ENCODE measurements at regions of chr11 and their contacts with region 1.

Region 1: DNA sequence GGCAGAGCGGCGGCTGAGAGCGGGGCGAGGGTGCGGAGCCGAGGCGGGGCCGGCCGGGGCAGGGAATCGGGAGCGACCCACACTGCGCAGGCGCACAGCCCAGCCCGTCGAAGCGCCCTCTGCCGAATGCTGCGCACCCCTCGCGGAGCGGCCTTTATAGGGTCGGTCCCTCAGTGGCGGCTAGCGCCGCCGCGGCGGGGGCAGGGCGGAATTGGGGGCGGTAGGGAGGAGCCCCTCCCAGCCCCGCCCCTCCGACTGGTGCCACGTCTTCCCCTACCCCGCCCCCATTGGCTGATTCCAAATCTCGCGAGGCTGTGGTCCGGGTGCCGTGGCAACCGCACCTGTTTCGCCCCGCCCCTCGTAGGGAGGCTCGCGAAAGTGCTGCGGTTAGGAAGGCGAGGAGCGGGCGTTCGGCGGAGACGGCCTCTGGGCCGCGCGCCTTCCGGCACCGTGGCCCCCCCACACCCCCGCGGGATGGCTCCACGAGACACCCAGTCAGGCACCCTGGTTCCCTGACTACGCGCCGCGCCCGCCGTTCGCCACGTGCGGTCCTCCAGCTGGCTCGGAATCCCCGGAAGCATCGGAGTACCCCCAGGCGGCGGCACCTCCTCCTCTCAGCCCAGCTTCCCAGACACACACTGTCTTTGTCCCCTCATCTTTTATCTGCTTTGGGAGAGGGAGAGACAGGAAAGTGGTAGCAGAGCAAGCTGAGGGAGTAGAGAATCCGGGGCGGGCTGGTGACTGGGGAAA is at the start of gene EHD1:
- DNase-seq: peak; percentile 100
- ATAC-seq: peak; percentile 85
- H3K4me3 Mint-ChIP-seq: peak within 1 kb of the TSS; percentile 92
- H3K27ac Mint-ChIP-seq: peak within 1 kb of the TSS; percentile 97
- H3K4me1 Mint-ChIP-seq: peaks cover 60% of the 10 kb centered on the region
- H3K27me3 Mint-ChIP-seq: no peaks in the 10 kb centered on the region
- total RNA-seq, gene EHD1: 71.0 to 73.6 TPM

Region 2: DNA sequence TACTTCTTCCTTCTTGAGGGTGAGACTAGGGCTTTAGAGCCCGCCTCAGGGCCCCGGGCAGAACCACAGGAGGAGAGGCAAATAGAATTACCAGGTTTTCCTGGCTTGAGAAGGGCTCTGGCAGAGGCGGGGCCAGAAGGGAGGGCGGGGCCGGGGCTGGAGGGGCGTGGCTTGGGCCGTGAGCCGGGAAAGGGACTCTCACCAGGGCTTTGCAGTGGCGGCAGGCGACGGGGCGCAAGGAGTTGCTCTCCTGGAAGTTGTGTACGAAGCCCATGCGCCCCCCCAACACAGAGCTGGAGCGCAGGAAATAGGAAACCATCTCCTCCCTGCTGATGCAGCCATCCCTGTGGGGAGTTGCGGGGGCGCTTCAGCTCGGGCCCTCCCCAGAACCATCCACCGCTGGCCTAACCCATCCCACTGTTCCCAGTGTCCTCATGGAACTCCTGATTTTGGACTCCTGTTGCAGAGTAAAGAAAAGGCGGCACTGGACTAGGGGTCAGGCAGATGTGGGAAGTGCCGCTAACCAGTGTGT is 148.8 kb before region 1 on chr11:
- CTCF ChIA-PET with region 1: no interaction called
- POLR2A ChIA-PET with region 1: no interaction called
- intact Hi-C with region 1: no loop called
- DNase-seq: peak; percentile 64
- ATAC-seq: peak; percentile 51
- H3K4me3 Mint-ChIP-seq: no peak overlapping the region
- H3K27ac Mint-ChIP-seq: no peak overlapping the region
- H3K4me1 Mint-ChIP-seq: peaks cover 6% of the 10 kb centered on the region
- H3K27me3 Mint-ChIP-seq: no peaks in the 10 kb centered on the region

Region 3: DNA sequence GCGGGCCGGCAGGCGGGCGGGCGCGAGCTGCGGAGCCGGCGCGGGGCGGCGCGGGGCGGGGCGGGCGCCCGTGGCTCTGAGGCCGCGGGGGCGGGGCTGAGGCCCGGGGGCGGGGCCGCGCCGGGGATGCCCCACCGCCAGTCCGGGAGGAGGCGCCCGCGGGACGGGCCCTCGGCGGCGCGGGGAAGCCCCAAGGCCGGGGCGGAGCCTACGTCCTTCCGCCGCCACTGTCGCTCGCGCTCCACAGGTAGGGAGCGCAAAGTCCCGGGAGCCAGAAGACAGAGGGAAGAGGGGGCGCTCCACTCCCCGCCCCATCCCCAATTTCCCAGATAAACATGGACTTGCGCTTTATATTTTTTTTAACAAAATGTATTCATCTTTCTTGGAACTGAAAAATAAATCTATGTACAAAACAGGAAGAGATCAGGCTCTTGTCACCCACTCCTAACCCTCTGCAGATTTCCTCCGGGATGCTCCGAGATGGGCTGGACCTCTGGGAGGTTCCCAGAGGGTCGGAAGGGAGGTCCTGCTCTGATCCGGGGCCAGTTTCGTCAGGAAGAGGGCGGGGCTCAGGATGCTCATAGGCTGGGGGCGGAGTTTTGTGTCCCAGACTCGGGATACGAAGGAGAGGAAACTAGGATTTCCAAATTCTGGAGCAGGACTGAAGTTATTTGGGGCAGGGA is 75.4 kb before region 1 on chr11 and contains the start of gene MAP4K2:
- CTCF ChIA-PET with region 1: no interaction called
- POLR2A ChIA-PET with region 1: no interaction called
- intact Hi-C with region 1: loop called in 1 of 2 experiments (anchors 1 kb)
- DNase-seq: peak; percentile 92
- ATAC-seq: peak; percentile 93
- H3K4me3 Mint-ChIP-seq: peak within 1 kb of the TSS; percentile 75
- H3K27ac Mint-ChIP-seq: peak within 1 kb of the TSS; percentile 90
- H3K4me1 Mint-ChIP-seq: peaks cover 27% of the 10 kb centered on the region
- H3K27me3 Mint-ChIP-seq: no peaks in the 10 kb centered on the region
- total RNA-seq, gene MAP4K2: 54.0 to 57.3 TPM

Region 4: GRCh38 chr11:64854534-64855429 is 23.9 kb before region 1 on chr11:
- CTCF ChIA-PET with region 1: interaction called, 139 read pairs
- POLR2A ChIA-PET with region 1: interaction called, 128 read pairs
- intact Hi-C with region 1: loop called in 1 of 2 experiments (anchors 1 kb)
- DNase-seq: peak; percentile 65
- ATAC-seq: no peak
- H3K4me3 Mint-ChIP-seq: peak overlapping the region; percentile 45
- H3K27ac Mint-ChIP-seq: peak overlapping the region; percentile 84
- H3K4me1 Mint-ChIP-seq: peaks cover 92% of the 10 kb centered on the region
- H3K27me3 Mint-ChIP-seq: no peaks in the 10 kb centered on the region

Region 5: DNA sequence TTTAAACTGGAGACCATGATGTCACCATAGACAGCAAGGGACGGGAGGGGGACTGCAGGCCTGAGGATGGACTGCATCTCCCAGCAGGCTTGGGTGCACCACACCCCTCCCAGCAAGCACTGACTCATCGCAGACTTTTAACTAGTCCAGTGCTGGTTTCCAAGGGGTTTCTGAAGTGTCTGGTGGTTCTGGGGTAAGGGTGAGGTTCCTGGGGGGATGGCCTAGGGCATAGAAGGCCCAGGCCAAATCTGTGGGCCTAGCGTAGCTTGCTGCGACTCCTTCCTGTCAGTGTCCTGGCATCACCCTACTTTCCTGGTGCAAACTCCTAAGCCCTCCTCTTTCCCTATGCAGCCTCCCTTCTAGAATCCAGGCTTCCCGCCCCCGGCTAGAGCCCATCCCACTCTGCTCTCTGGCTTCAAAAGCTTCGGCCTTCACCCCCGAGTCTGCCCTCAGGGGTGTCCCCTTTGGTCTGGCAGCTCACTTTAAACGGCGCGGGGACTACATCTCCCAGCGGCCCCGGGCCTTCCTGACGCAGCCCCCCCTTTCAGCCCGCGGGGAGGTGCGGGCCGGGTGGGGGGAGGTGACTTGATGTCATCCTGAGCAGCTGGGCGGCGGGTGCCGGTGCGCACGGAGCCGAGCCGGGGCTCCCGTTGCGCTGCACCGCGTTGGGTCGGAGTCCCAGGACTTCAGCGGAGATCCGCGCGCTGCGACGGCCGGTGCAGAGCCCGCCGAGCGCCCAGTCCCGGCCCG is 45.6 kb after region 1 on chr11 and contains the start of gene PPP2R5B:
- CTCF ChIA-PET with region 1: no interaction called
- POLR2A ChIA-PET with region 1: no interaction called
- intact Hi-C with region 1: loop called (anchors 1 to 2 kb)
- DNase-seq: peak; percentile 95
- ATAC-seq: peak; percentile 95
- H3K4me3 Mint-ChIP-seq: peak within 1 kb of the TSS; percentile 81
- H3K27ac Mint-ChIP-seq: peak within 1 kb of the TSS; percentile 98
- H3K4me1 Mint-ChIP-seq: peaks cover 9% of the 10 kb centered on the region
- H3K27me3 Mint-ChIP-seq: no peaks in the 10 kb centered on the region
- total RNA-seq, gene PPP2R5B: 13.2 to 13.5 TPM

Region 6: DNA sequence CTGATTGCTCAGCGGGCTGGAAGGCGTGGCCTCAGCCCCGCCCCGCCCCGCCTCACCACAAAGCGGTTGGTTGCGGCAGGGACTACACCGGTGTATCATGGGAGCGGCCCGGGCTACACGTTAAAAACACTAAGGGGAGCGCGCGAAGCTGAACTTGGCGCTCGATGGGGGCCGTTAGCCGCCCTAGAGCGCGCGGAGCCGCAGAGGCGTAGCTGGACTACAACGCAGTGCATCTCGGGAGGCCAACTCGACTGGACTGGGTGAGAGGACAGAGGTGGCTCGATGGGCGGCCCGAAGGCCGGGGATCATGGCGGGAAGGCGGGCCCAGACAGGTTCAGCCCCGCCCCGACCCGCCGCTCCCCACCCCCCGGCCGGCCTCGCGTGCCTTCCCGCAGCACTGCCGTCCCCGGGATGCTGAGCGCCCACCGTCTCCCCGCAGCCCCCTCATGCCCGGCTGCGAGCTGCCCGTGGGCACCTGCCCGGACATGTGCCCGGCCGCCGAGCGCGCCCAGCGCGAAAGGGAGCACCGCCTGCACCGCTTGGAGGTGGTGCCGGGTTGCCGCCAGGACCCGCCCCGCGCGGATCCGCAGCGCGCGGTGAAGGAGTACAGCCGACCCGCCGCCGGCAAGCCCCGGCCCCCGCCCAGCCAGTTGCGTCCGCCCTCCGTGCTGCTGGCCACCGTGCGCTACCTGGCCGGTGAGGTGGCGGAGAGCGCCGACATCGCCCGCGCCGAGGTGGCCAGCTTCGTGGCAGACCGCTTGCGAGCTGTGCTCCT is 162.4 kb after region 1 on chr11 and contains the start of gene SAC3D1:
- CTCF ChIA-PET with region 1: no interaction called
- POLR2A ChIA-PET with region 1: no interaction called
- intact Hi-C with region 1: loop called in 1 of 2 experiments (anchors 1 kb)
- DNase-seq: peak; percentile 96
- ATAC-seq: peak; percentile 95
- H3K4me3 Mint-ChIP-seq: peak within 1 kb of the TSS; percentile 86
- H3K27ac Mint-ChIP-seq: peak within 1 kb of the TSS; percentile 95
- H3K4me1 Mint-ChIP-seq: peaks cover 17% of the 10 kb centered on the region
- H3K27me3 Mint-ChIP-seq: no peaks in the 10 kb centered on the region
- total RNA-seq, gene SAC3D1: 10.5 to 12.1 TPM

Region 7: GRCh38 chr11:65134386-65135253 is 256.0 kb after region 1 on chr11 and contains the start of gene SYVN1:
- CTCF ChIA-PET with region 1: no interaction called
- POLR2A ChIA-PET with region 1: no interaction called
- intact Hi-C with region 1: loop called in 1 of 2 experiments (anchors 1 kb)
- DNase-seq: peak; percentile 95
- ATAC-seq: peak; percentile 91
- H3K4me3 Mint-ChIP-seq: peak within 1 kb of the TSS; percentile 97
- H3K27ac Mint-ChIP-seq: peak within 1 kb of the TSS; percentile 97
- H3K4me1 Mint-ChIP-seq: peaks cover 27% of the 10 kb centered on the region
- H3K27me3 Mint-ChIP-seq: no peaks in the 10 kb centered on the region
- total RNA-seq, gene SYVN1: 24.3 to 31.1 TPM

Measured in activated CD4-positive, alpha-beta T cell treated with anti-CD3 and anti-CD28 coated beads for 36 hours (primary cell).